Mammary epithelial cell (primary cell): ENCODE measurements at regions of chr12 and their contacts with region 1.

Region 1: DNA sequence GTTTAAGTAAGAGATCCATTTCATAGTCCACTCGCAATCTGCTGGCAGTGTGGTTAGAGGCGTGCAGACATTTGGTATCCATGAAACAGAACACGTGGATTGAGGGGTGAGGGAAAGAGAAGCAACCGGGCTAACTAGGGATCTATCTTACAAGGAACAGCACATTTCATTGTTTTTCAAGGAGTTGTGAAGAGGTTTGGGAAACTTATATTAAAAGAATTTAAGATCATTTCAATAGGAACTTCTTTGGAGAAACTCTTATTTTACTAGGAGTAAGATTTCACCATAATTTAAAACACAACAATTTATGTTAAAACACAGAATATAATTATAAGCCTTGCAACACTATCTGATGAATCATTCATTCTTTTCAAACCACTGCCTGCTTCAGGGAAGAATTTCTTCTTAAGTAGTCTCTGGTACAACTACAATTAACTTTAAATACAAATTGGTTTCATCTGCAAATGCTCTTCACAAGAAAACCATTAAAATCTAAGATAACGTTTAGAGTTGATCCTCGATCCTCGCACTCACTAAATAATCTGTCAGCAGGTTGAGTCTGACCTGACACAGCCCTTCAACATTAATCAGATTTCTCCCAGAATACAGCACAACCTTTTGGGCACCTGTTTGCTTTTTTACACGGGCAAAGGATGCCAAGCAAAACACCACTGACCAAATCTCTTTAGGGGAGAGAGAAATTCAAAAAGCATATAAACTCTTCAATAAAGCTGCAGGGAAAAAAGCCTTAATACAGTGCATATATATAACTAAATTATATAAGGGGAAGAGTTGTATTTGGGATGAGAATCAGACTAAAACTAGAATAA is 27.3 kb downstream of the PPTC7 start:
- DNase-seq: peak; percentile 76
- H3K4me3 ChIP-seq: peak overlapping the region; percentile 9 to 26 (median 20)
- H3K27ac ChIP-seq: peak overlapping the region; percentile 90
- H3K4me1 ChIP-seq: peaks cover 25% of the 10 kb centered on the region
- H3K27me3 ChIP-seq: no peaks in the 10 kb centered on the region
- CTCF ChIP-seq: no peak

Region 2: DNA sequence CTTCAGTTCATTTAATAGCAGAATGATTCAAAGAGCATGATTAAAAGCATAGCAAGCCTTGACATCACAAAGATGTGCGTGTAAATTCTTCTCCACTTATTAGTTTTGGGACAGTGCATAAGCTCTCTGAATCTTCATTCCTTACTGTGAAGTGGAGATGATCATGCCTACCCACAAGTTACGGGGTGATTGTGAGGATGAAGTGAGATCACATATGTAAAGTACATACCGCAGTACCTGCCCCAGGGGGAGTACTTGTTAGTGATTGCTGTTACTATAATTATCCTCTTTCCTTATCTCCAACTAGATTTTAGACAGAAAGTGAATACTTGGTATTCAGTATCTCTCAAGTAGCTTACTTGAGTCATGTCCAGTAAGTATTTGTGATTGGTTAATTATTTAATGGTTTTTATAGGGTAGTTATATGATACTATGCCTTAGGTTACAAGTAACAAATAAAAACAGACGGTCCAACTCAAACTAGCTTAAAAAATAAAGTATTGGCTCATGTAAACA is 47.7 kb before region 1 on chr12:
- CTCF ChIA-PET with region 1: no interaction called
- dilution Hi-C with region 1: no loop called
- in situ Hi-C with region 1: no loop called
- intact Hi-C with region 1: loop called (anchors 1 kb)
- DNase-seq: no peak
- H3K4me3 ChIP-seq: no peak overlapping the region
- H3K27ac ChIP-seq: no peak overlapping the region
- H3K4me1 ChIP-seq: no peaks in the 10 kb centered on the region
- H3K27me3 ChIP-seq: no peaks in the 10 kb centered on the region
- CTCF ChIP-seq: no peak

Region 3: DNA sequence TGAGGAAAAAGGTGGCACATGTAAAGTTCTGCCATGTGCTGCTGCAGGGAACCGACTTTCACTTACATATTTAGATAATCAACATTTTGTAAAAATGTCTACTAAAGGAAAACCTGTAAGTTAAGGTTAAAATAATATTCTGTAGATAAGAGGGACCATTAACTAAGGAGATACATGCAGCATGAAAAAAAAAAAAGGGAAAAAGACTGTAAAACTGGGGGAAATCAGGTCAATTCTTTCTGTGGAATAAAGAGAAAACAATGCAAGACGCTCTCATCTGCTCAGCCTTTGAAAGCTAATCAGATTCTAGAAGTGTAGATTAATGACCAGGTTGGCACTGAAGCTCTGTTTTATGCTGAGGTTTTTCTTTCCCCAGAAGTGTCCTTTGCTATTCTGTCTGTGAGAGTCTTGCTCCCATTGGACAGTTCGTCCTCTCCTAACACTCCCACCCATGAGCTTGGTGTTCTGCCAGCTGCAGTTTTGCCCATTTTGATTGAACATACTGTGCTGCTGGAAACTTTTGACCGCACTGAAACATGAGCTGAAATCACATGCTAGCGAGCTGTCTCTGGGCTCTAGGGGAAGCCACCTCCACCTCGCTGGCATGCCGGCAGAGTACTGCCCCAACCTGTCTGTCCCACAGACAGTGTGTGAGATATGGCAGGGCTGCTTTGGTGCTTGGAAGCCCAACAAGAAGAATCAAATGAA is 12.4 kb before region 1 on chr12:
- CTCF ChIA-PET with region 1: interaction called, 10 read pairs
- dilution Hi-C with region 1: no loop called
- in situ Hi-C with region 1: no loop called
- intact Hi-C with region 1: no loop called
- DNase-seq: peak; percentile 98
- H3K4me3 ChIP-seq: no peak overlapping the region
- H3K27ac ChIP-seq: peak overlapping the region; percentile 68
- H3K4me1 ChIP-seq: peaks cover 52% of the 10 kb centered on the region
- H3K27me3 ChIP-seq: no peaks in the 10 kb centered on the region
- CTCF ChIP-seq: no peak

Region 4: DNA sequence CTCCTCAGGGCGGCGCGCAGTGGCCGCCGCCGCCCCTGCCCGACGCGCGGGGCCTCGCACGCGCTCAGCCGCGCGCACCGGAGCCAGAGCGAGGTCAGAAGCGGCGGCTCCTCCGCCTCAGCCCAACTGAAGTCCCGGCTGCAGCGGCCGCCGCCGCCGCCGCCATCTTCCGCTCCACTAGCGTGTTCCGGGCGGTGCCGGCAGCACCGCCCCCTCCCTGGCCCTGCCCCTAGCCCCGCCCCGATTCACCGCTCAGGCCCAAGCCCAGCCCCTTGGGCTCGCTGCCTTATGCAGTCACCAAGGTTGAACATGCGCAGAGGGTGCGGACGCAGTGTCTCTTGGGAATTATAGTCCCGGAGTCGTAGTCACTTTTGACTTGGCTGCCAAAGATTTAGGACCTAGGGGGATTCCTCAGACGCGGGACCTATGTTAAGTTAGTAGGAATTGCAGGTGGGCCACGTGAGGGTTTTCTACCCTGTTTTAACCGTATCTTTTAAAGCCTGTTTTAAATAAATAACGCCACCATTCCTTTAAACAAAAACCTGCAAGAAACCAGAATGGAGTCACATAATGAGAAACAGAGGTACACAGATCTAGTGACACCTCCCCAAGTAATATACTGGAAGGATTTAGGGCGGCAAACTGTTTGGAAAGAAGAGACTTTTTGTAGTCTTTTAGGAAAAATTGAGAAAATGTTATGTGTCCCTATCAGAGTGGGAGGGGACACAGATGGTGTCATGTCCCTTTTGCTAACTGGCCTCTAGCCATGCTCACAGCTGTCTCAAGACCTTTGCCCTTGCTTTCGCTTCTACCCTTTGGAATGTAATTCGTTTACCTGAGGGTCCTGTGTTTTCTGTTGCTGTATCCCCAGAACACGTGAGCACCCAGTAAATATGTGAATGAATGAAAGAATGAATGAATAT is 27.6 kb after region 1 on chr12 and contains the start of gene PPTC7:
- CTCF ChIA-PET with region 1: interaction called, 6 read pairs
- dilution Hi-C with region 1: no loop called
- in situ Hi-C with region 1: no loop called
- intact Hi-C with region 1: loop called (anchors 1 kb)
- DNase-seq: peak; percentile 93
- H3K4me3 ChIP-seq: peak within 1 kb of the TSS; percentile 69 to 98 (median 97)
- H3K27ac ChIP-seq: peak within 1 kb of the TSS; percentile 93
- H3K4me1 ChIP-seq: peaks cover 33% of the 10 kb centered on the region
- H3K27me3 ChIP-seq: no peaks in the 10 kb centered on the region
- CTCF ChIP-seq: no peak
- total RNA-seq, gene PPTC7: 17.7 to 26.5 TPM

Region 5: GRCh38 chr12:110590806-110591326 is 35.1 kb after region 1 on chr12:
- CTCF ChIA-PET with region 1: interaction called, 3 read pairs
- dilution Hi-C with region 1: no loop called
- in situ Hi-C with region 1: loop called (anchors 5 kb)
- intact Hi-C with region 1: no loop called
- DNase-seq: no peak
- H3K4me3 ChIP-seq: no peak overlapping the region
- H3K27ac ChIP-seq: no peak overlapping the region
- H3K4me1 ChIP-seq: no peaks in the 10 kb centered on the region
- H3K27me3 ChIP-seq: no peaks in the 10 kb centered on the region
- CTCF ChIP-seq: no peak

Region 6: DNA sequence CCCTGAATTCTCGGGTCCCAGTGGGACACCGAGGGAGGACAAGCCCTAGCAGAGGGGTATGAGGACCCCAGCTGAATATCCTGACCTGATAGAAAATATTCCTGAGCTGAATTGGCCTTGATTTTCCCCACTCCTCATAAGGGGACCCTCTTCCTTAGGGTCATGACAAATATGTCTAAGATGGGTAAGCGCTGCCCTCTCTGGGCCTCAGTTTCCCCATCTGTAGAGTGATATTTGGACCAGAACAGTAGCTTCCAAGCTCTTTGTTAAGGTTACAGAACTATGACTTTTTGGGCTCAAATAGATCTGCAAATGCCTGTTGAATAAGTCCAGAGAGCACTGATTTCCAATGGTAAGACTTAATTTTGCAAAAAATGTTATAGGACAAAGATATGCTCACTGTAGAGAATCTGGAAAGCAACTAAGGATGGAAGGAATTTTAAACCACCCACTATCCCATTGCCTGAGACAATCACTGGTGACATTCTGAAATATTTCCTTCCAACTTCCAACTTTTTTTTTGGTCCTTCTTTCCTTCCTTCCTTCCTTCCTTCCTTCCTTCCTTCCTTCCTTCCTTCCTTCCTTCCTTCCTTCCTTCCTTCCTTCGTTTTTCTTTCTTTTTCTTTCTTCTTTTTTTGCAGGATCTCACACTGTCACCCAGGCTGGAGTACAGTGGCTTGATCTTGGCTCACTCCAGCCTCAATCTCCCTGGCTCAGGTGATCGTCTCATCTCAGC is 332.6 kb after region 1 on chr12:
- CTCF ChIA-PET with region 1: no interaction called
- dilution Hi-C with region 1: no loop called
- in situ Hi-C with region 1: no loop called
- intact Hi-C with region 1: loop called (anchors 1 kb)
- DNase-seq: no peak
- H3K4me3 ChIP-seq: no peak overlapping the region
- H3K27ac ChIP-seq: no peak overlapping the region
- H3K4me1 ChIP-seq: peaks cover 9% of the 10 kb centered on the region
- H3K27me3 ChIP-seq: no peaks in the 10 kb centered on the region
- CTCF ChIP-seq: no peak